ENCODE measurements at regions of chr15 and their contacts with region 1.

Region 1: DNA sequence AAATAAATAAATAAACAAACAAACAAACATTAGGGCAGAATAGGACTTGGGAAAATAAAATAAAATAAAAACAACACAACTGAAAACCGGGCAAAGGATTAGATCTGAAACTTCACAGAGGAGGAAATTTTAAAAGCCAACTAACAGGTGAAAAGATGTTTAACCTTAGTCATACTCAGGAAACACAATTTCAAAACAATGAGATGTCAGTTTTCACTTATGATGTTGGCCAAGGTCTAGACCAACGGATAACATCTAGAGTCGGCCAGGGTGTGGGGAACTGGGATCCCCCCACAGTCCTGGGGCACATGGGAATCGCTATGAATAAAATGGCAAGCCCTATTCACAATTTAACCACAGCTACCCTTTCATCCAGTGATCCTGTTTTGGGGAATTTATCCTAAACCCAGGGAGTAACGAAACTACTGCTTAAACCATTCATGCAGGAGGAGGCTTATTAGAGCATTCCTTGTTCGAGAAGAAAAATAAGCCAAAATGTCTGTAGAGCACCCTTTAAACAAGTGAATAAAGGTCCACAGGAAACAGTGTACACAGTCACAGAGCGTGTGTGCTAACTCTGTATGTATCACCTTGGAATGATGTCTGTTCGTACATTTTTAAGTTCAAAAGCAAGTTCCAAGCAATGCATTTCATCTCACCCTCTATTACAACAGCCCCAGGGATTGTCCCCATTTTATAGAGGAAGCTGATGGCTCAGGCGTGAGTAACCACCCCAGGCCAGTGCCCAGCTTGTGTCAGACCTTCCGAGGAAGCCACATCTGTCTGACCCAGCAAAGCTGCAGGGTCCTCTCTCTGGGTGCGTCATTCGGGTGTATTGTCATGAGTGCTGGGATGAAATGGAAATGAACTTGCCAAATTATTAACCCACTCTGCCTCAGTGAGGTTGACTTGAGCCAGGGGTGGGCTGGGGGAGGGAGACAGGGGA is 6.3 kb upstream of the ANPEP start:
- DNase-seq: peak; percentile 86
- H3K4me3 ChIP-seq: no peak overlapping the region
- H3K27ac ChIP-seq: peak overlapping the region; percentile 31
- H3K4me1 ChIP-seq: peaks cover 45% of the 10 kb centered on the region
- H3K27me3 ChIP-seq: no peaks in the 10 kb centered on the region
- CTCF ChIP-seq: no peak

Region 2: GRCh38 chr15:89781891-89782618 is 38.9 kb before region 1 on chr15:
- CTCF ChIA-PET with region 1: no interaction called
- dilution Hi-C with region 1: no loop called
- in situ Hi-C with region 1: no loop called
- intact Hi-C with region 1: loop called (anchors 5 kb)
- DNase-seq: peak; percentile 94
- H3K4me3 ChIP-seq: no peak overlapping the region
- H3K27ac ChIP-seq: peak overlapping the region; percentile 59
- H3K4me1 ChIP-seq: peaks cover 41% of the 10 kb centered on the region
- H3K27me3 ChIP-seq: no peaks in the 10 kb centered on the region
- CTCF ChIP-seq: no peak